RWPE1 (cell line): ENCODE measurements at regions of chr2 and their contacts with region 1.

Region 1: GRCh38 chr2:229974266-229974665 is 52.0 kb downstream of the FBXO36 start:
- DNase-seq: no peak
- H3K27ac ChIP-seq: no peak overlapping the region
- CTCF ChIP-seq: no peak

Region 2: GRCh38 chr2:229586746-229587705 is 387.2 kb before region 1 on chr2:
- CTCF ChIA-PET with region 1: no interaction called
- POLR2A ChIA-PET with region 1: no interaction called
- DNase-seq: peak; percentile 87
- H3K27ac ChIP-seq: peak overlapping the region; percentile 88
- CTCF ChIP-seq: peak; percentile 90

Region 3: GRCh38 chr2:231043796-231044195 is 1069.5 kb after region 1 on chr2:
- CTCF ChIA-PET with region 1: interaction called, 10 read pairs
- POLR2A ChIA-PET with region 1: no interaction called
- DNase-seq: no peak
- H3K27ac ChIP-seq: no peak overlapping the region
- CTCF ChIP-seq: no peak